Activated T-helper 2 cell treated with anti-CD3 and anti-CD28 coated beads, Interferon-gamma antibody, Interleukin-2, Interleukin-4, amounts not matched to agents 10 μg/mL and 5 μg/mL and 100 μg/mL, durations not matched to agents 14 hours and 24 hours and 36 hours (primary cell): ENCODE measurements at regions of chr3 and their contacts with region 1.

Region 1: GRCh38 chr3:69084326-69085167 is at the start of gene ARL6IP5:
- DNase-seq: peak; percentile 89
- H3K4me3 Mint-ChIP-seq: peak within 1 kb of the TSS; percentile 96
- H3K27ac Mint-ChIP-seq: peak within 1 kb of the TSS; percentile 98
- H3K4me1 Mint-ChIP-seq: peaks cover 53% of the 10 kb centered on the region
- H3K27me3 Mint-ChIP-seq: no peaks in the 10 kb centered on the region
- total RNA-seq, gene ARL6IP5: 124 and 127 TPM in 2 replicates

Region 2: GRCh38 chr3:69013253-69014021 is 71.1 kb before region 1 on chr3 and contains the start of gene EOGT:
- intact Hi-C with region 1: loop called (anchors 2 kb)
- DNase-seq: peak; percentile 77
- H3K4me3 Mint-ChIP-seq: peak within 1 kb of the TSS; percentile 84
- H3K27ac Mint-ChIP-seq: peak within 1 kb of the TSS; percentile 71
- H3K4me1 Mint-ChIP-seq: peaks cover 24% of the 10 kb centered on the region
- H3K27me3 Mint-ChIP-seq: no peaks in the 10 kb centered on the region
- total RNA-seq, gene EOGT: 15.4 and 18.1 TPM in 2 replicates

Region 3: GRCh38 chr3:69033470-69033869 is 51.1 kb before region 1 on chr3:
- intact Hi-C with region 1: loop called (anchors 2 kb)
- DNase-seq: no peak
- H3K4me3 Mint-ChIP-seq: no peak overlapping the region
- H3K27ac Mint-ChIP-seq: peak overlapping the region; percentile 78
- H3K4me1 Mint-ChIP-seq: peaks cover 18% of the 10 kb centered on the region
- H3K27me3 Mint-ChIP-seq: no peaks in the 10 kb centered on the region

Region 4: GRCh38 chr3:69051756-69052471 is 32.6 kb before region 1 on chr3 and contains the start of gene TMF1:
- intact Hi-C with region 1: loop called (anchors 1 kb)
- DNase-seq: peak; percentile 97
- H3K4me3 Mint-ChIP-seq: peak within 1 kb of the TSS; percentile 94
- H3K27ac Mint-ChIP-seq: peak within 1 kb of the TSS; percentile 92
- H3K4me1 Mint-ChIP-seq: peaks cover 34% of the 10 kb centered on the region
- H3K27me3 Mint-ChIP-seq: no peaks in the 10 kb centered on the region
- total RNA-seq, gene TMF1: 35.7 and 38.9 TPM in 2 replicates

Region 5: GRCh38 chr3:69058947-69059224 is 25.7 kb before region 1 on chr3:
- intact Hi-C with region 1: loop called (anchors 1 kb)
- DNase-seq: no peak
- H3K4me3 Mint-ChIP-seq: peak overlapping the region; percentile 15
- H3K27ac Mint-ChIP-seq: peak overlapping the region; percentile 72
- H3K4me1 Mint-ChIP-seq: peaks cover 55% of the 10 kb centered on the region
- H3K27me3 Mint-ChIP-seq: no peaks in the 10 kb centered on the region

Region 6: DNA sequence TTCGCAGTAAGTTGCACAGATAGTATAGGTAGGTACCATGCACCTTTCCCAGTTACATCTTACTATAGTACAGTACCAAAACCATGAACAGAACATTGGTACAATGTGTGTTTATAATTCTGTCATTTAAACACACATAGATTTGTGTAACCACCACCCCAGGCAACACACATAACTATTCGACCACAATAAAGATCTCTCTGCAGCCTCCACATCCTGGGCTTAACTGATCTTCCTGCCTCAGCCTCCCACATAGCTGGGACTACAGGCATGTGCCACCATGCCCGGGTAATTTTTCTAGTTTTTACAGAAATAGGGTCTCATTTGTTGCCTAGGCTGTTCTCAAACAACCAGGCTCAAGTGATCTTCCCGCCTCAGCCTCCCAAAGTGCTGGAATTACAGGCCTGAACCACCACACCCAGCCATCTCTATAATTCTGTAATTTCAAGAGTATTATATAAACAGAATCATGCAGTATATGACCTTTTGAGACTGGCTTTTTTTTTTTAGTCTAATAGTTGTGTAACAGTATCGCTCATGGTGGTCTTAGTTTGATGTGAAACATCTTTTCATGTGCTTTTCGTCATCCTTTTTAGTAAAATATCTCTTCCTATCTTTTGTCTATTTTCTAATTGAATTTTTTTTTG is 19.1 kb before region 1 on chr3:
- intact Hi-C with region 1: loop called (anchors 1 kb)
- DNase-seq: no peak
- H3K4me3 Mint-ChIP-seq: peak overlapping the region; percentile 47
- H3K27ac Mint-ChIP-seq: peak overlapping the region; percentile 71
- H3K4me1 Mint-ChIP-seq: peaks cover 43% of the 10 kb centered on the region
- H3K27me3 Mint-ChIP-seq: no peaks in the 10 kb centered on the region

Region 7: DNA sequence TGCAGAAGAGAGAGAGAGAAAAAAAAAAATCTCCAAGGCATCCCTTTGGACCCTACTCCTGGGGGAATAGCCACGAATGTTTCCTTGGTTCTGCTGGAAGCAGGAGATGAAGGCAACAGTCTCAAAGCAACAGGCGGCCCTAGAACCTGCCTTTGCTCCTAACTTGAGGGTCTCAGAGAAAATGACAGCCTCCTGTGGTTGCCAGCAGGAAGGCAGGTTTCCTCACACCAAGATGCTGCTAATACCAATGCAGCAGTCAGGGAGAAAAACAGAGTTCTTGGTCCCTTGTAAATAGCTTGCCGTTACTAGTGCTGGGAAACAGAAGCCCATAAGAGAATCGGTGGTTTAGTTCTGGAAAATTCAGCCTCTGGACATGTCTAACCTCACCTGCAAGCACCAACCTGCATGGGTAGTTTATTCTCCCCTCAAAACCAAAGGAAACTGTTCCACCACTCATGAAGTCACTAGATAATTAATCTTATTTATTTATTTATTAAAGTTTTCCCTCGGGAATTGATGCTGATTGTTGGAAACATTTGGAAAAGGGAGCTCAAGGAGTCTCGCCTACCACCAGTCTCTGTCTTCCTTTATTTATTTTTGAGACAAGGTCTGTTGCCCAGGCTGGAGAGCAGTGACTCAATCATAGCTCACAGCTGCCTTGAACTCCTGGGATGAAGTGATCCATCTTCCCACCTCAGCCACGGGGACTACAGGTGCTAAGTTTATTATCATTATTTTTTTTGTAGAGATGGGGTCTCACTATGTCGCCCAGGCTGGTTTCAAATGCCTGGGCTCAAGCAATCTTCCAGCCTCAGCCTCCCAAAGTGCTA is 302.2 kb after region 1 on chr3:
- intact Hi-C with region 1: no loop called
- DNase-seq: no peak
- H3K4me3 Mint-ChIP-seq: peak overlapping the region; percentile 69
- H3K27ac Mint-ChIP-seq: no peak overlapping the region
- H3K4me1 Mint-ChIP-seq: peaks cover 7% of the 10 kb centered on the region
- H3K27me3 Mint-ChIP-seq: peaks cover 62% of the 10 kb centered on the region

Region 8: GRCh38 chr3:69439643-69440270 is 355.2 kb after region 1 on chr3:
- intact Hi-C with region 1: loop called (anchors 5 kb)
- DNase-seq: no peak
- H3K4me3 Mint-ChIP-seq: no peak overlapping the region
- H3K27ac Mint-ChIP-seq: no peak overlapping the region
- H3K4me1 Mint-ChIP-seq: peaks cover 27% of the 10 kb centered on the region
- H3K27me3 Mint-ChIP-seq: no peaks in the 10 kb centered on the region